ENCODE measurements at regions of chr2 and their contacts with region 1.

Region 1: GRCh38 chr2:39513641-39514094 is 76.6 kb upstream of the MAP4K3 start:
- DNase-seq: peak; percentile 69 to 87 (median 73)
- ATAC-seq: peak; percentile 75
- H3K4me3 ChIP-seq: no peak overlapping the region
- H3K27ac ChIP-seq: peak overlapping the region; percentile 77
- H3K4me1 ChIP-seq: peaks cover 27 to 53% of the 10 kb centered on the region in 2 experiments
- H3K27me3 ChIP-seq: no peaks in the 10 kb centered on the region
- CTCF ChIP-seq: peak; percentile 63 to 81 (median 72)
- EP300 ChIP-seq: no peak
- POLR2A ChIP-seq: no peak
- RAD21 ChIP-seq: peak; percentile 73 to 86

Region 2: GRCh38 chr2:39379643-39380524 is 133.8 kb before region 1 on chr2:
- CTCF ChIA-PET with region 1: no interaction called
- POLR2A ChIA-PET with region 1: interaction called, 3 read pairs
- in situ Hi-C with region 1: no loop called
- intact Hi-C with region 1: loop called (anchors 1 kb)
- DNase-seq: peak; percentile 30 to 66 (median 36)
- ATAC-seq: peak; percentile 79
- H3K4me3 ChIP-seq: no peak overlapping the region
- H3K27ac ChIP-seq: peak overlapping the region; percentile 29; the same call in 1 of the 3 replicates
- H3K4me1 ChIP-seq: peaks cover 3 to 8% of the 10 kb centered on the region in 2 experiments
- H3K27me3 ChIP-seq: no peaks in the 10 kb centered on the region
- CTCF ChIP-seq: peak; percentile 41 to 69 (median 57); a peak in 5 of 6 replicates
- EP300 ChIP-seq: no peak
- POLR2A ChIP-seq: no peak
- RAD21 ChIP-seq: peak; percentile 74 to 86

Region 3: GRCh38 chr2:39503277-39503676 is 10.4 kb before region 1 on chr2:
- CTCF ChIA-PET with region 1: no interaction called
- POLR2A ChIA-PET with region 1: interaction called, 11 read pairs
- in situ Hi-C with region 1: no loop called
- intact Hi-C with region 1: no loop called
- DNase-seq: no peak
- ATAC-seq: no peak; the same call in 2 of the 3 replicates
- H3K4me3 ChIP-seq: no peak overlapping the region
- H3K27ac ChIP-seq: no peak overlapping the region
- H3K4me1 ChIP-seq: peaks cover 3 to 10% of the 10 kb centered on the region in 2 experiments; a peak in 4 of 5 replicates
- H3K27me3 ChIP-seq: no peaks in the 10 kb centered on the region
- CTCF ChIP-seq: no peak
- EP300 ChIP-seq: no peak
- POLR2A ChIP-seq: no peak
- RAD21 ChIP-seq: no peak

Region 4: GRCh38 chr2:39571111-39571731 is 57.6 kb after region 1 on chr2:
- CTCF ChIA-PET with region 1: no interaction called
- POLR2A ChIA-PET with region 1: no interaction called
- in situ Hi-C with region 1: no loop called
- intact Hi-C with region 1: no loop called
- DNase-seq: no peak
- ATAC-seq: no peak
- H3K4me3 ChIP-seq: no peak overlapping the region
- H3K27ac ChIP-seq: no peak overlapping the region
- H3K4me1 ChIP-seq: no peaks in the 10 kb centered on the region
- H3K27me3 ChIP-seq: no peaks in the 10 kb centered on the region; a peak in 1 of 5 replicates
- CTCF ChIP-seq: no peak
- EP300 ChIP-seq: no peak
- POLR2A ChIP-seq: no peak
- RAD21 ChIP-seq: no peak

Region 5: GRCh38 chr2:39696838-39697237 is 183.2 kb after region 1 on chr2:
- CTCF ChIA-PET with region 1: no interaction called
- POLR2A ChIA-PET with region 1: no interaction called
- in situ Hi-C with region 1: no loop called
- intact Hi-C with region 1: loop called (anchors 1 kb)
- DNase-seq: peak in 1 of 4 experiments; percentile 6
- ATAC-seq: peak; percentile 71
- H3K4me3 ChIP-seq: no peak overlapping the region
- H3K27ac ChIP-seq: no peak overlapping the region
- H3K4me1 ChIP-seq: no peaks in the 10 kb centered on the region
- H3K27me3 ChIP-seq: no peaks in the 10 kb centered on the region; a peak in 1 of 5 replicates
- CTCF ChIP-seq: peak in 2 of 3 experiments; percentile 10 to 43; a peak in 2 of 6 replicates
- EP300 ChIP-seq: no peak
- POLR2A ChIP-seq: no peak
- RAD21 ChIP-seq: peak; percentile 60 to 67

Region 6: GRCh38 chr2:39723946-39724827 is 210.5 kb after region 1 on chr2:
- CTCF ChIA-PET with region 1: no interaction called
- POLR2A ChIA-PET with region 1: no interaction called
- in situ Hi-C with region 1: no loop called
- intact Hi-C with region 1: no loop called
- DNase-seq: no peak
- ATAC-seq: no peak
- H3K4me3 ChIP-seq: no peak overlapping the region
- H3K27ac ChIP-seq: no peak overlapping the region
- H3K4me1 ChIP-seq: no peaks in the 10 kb centered on the region
- H3K27me3 ChIP-seq: peaks cover 10 to 27% of the 10 kb centered on the region in 2 experiments; a peak in 4 of 5 replicates
- CTCF ChIP-seq: no peak
- EP300 ChIP-seq: no peak
- POLR2A ChIP-seq: no peak
- RAD21 ChIP-seq: no peak

Measured in K562 (cell line).